Activated CD8-positive, alpha-beta T cell treated with anti-CD3 and anti-CD28 coated beads, Interleukin-2, amount 10 ng/mL, durations not matched to agents 7 days and 5 days (primary cell): ENCODE measurements at regions of chr17 and their contacts with region 1.

Region 1: GRCh38 chr17:77109764-77110359 is 30.9 kb upstream of the SEC14L1 start:
- DNase-seq: peak; percentile 40
- ATAC-seq: peak; percentile 32
- H3K4me3 Mint-ChIP-seq: peak overlapping the region; percentile 44
- H3K27ac Mint-ChIP-seq: peak overlapping the region; percentile 83
- H3K4me1 Mint-ChIP-seq: peaks cover 51% of the 10 kb centered on the region
- H3K27me3 Mint-ChIP-seq: no peaks in the 10 kb centered on the region

Region 2: DNA sequence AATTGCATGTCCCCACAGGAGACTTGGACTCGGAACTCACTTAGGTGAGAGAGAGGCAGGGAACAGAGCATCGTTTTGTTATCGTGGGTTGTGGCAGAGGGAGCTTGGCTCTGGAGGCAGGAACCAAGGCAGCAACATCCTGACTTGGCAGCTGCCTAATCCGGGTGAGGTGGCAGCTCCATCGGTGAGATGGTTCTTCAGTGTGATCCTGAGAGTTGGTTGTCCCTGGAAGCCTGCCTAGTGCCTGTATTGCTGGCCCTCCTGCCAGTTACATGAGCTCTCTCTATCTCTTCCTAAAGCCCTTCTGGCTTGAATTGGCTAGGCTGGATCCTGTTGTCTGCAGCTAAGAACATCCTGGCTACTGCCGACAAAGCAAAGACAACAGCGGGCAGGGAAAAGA is 11.0 kb after region 1 on chr17:
- CTCF ChIA-PET with region 1: interaction called, 23 read pairs
- POLR2A ChIA-PET with region 1: interaction called, 3 read pairs
- DNase-seq: no peak
- ATAC-seq: no peak
- H3K4me3 Mint-ChIP-seq: no peak overlapping the region
- H3K27ac Mint-ChIP-seq: no peak overlapping the region
- H3K4me1 Mint-ChIP-seq: peaks cover 18% of the 10 kb centered on the region
- H3K27me3 Mint-ChIP-seq: no peaks in the 10 kb centered on the region

Region 3: GRCh38 chr17:77127735-77128361 is 18.0 kb after region 1 on chr17:
- CTCF ChIA-PET with region 1: interaction called, 23 read pairs
- POLR2A ChIA-PET with region 1: interaction called, 6 read pairs
- DNase-seq: peak; percentile 92
- ATAC-seq: peak; percentile 92
- H3K4me3 Mint-ChIP-seq: peak overlapping the region; percentile 66
- H3K27ac Mint-ChIP-seq: peak overlapping the region; percentile 98
- H3K4me1 Mint-ChIP-seq: peaks cover 63% of the 10 kb centered on the region
- H3K27me3 Mint-ChIP-seq: no peaks in the 10 kb centered on the region